ENCODE measurements at regions of chr3 and their contacts with region 1.

Region 1: DNA sequence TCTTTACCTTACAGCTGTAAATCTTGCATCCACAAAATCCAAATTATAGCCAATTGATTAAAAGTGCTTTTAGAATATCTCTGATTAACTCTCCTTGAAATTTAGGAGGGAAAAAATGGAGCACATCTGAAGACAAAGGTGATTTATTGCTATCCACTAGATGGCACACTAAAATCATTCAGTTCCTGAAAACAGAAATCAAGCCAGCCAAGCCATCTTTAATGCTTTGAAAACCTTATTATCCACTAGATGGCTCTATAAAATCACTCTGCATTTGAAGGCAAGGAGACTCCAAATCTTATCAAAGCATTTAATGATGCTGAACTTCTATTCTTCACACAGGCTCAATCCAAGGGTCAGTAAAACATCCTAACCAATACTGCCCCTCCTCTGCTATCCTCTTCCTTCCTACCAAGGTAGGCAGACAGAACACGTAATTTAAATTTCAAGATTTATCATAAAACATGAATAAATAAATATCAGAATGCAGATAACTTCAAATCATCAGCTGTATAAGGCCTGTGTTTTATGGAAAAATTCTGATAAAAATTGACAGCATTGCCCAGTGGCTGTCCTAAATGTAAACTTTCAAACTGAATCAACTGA is 48.4 kb downstream of the GOLIM4 start:
- DNase-seq: peak; percentile 59
- ATAC-seq: peak; percentile 81
- H3K4me3 ChIP-seq: no peak overlapping the region
- H3K27ac ChIP-seq: no peak overlapping the region
- H3K4me1 ChIP-seq: peaks cover 6% of the 10 kb centered on the region
- H3K27me3 ChIP-seq: no peaks in the 10 kb centered on the region
- CTCF ChIP-seq: peak; percentile 64 to 96 (median 83)
- EP300 ChIP-seq: no peak
- POLR2A ChIP-seq: no peak
- RAD21 ChIP-seq: peak; percentile 97

Region 2: DNA sequence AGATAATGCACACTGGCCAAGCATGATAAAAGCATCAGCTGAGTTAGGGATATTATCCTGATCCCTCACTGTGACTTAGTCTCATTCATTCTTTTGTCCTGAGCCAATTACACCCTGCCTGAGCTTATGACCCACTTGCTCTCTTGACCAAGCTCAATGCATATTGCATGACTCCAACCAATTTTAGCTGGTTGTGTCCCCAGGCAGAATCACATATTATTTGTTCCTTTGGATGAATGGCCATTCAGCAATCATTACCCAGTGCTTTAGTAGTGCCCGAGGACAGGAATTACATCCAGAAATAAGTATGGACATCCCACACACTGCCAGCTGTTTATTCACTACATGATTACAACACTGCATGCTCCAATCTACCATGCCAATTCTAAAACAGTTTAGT is 989.7 kb before region 1 on chr3:
- CTCF ChIA-PET with region 1: no interaction called
- POLR2A ChIA-PET with region 1: no interaction called
- RAD21 ChIA-PET with region 1: no interaction called
- SMC1A ChIA-PET with region 1: no interaction called
- in situ Hi-C with region 1: no loop called
- intact Hi-C with region 1: no loop called
- DNase-seq: no peak
- ATAC-seq: no peak
- H3K4me3 ChIP-seq: no peak overlapping the region
- H3K27ac ChIP-seq: no peak overlapping the region
- H3K4me1 ChIP-seq: no peaks in the 10 kb centered on the region
- H3K27me3 ChIP-seq: no peaks in the 10 kb centered on the region
- CTCF ChIP-seq: no peak
- EP300 ChIP-seq: no peak
- POLR2A ChIP-seq: no peak
- RAD21 ChIP-seq: no peak

Region 3: DNA sequence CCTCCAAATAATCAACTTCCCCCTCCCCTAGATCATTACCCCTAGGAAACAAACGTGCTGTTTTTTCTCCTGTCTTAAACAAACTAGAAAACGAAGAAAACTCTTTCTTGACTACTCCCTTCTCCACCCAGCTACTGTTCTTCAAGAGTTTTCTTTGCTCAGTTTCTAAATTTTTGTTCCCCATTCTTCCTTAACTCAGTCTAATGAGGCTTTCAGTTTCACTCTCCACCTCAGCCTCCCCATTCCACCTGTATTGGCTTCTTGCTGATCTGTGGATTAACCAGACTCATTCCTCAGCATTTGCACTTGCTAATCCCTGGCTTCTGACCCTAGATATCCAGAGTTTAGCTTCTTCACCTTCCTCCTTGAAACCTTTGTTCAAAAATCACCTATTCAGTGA is 285.0 kb before region 1 on chr3:
- CTCF ChIA-PET with region 1: no interaction called
- POLR2A ChIA-PET with region 1: no interaction called
- RAD21 ChIA-PET with region 1: no interaction called
- SMC1A ChIA-PET with region 1: no interaction called
- in situ Hi-C with region 1: no loop called
- intact Hi-C with region 1: no loop called
- DNase-seq: no peak
- ATAC-seq: no peak
- H3K4me3 ChIP-seq: no peak overlapping the region
- H3K27ac ChIP-seq: no peak overlapping the region
- H3K4me1 ChIP-seq: no peaks in the 10 kb centered on the region
- H3K27me3 ChIP-seq: no peaks in the 10 kb centered on the region
- CTCF ChIP-seq: no peak
- EP300 ChIP-seq: no peak
- POLR2A ChIP-seq: no peak
- RAD21 ChIP-seq: no peak

Region 4: GRCh38 chr3:167958141-167958540 is 89.2 kb before region 1 on chr3:
- CTCF ChIA-PET with region 1: no interaction called
- POLR2A ChIA-PET with region 1: no interaction called
- RAD21 ChIA-PET with region 1: no interaction called
- SMC1A ChIA-PET with region 1: no interaction called
- in situ Hi-C with region 1: no loop called
- intact Hi-C with region 1: no loop called
- DNase-seq: no peak
- ATAC-seq: no peak
- H3K4me3 ChIP-seq: no peak overlapping the region
- H3K27ac ChIP-seq: no peak overlapping the region
- H3K4me1 ChIP-seq: no peaks in the 10 kb centered on the region
- H3K27me3 ChIP-seq: no peaks in the 10 kb centered on the region
- CTCF ChIP-seq: no peak
- EP300 ChIP-seq: no peak
- POLR2A ChIP-seq: no peak
- RAD21 ChIP-seq: no peak

Region 5: GRCh38 chr3:168061332-168061996 is 14.2 kb after region 1 on chr3:
- CTCF ChIA-PET with region 1: interaction called, 35 read pairs
- POLR2A ChIA-PET with region 1: no interaction called
- RAD21 ChIA-PET with region 1: interaction called, 19 read pairs
- SMC1A ChIA-PET with region 1: interaction called, 19 read pairs
- in situ Hi-C with region 1: no loop called
- intact Hi-C with region 1: no loop called
- DNase-seq: no peak
- ATAC-seq: peak; percentile 96
- H3K4me3 ChIP-seq: peak overlapping the region; percentile 42; the same call in 1 of the 2 replicates
- H3K27ac ChIP-seq: no peak overlapping the region
- H3K4me1 ChIP-seq: peaks cover 10% of the 10 kb centered on the region
- H3K27me3 ChIP-seq: no peaks in the 10 kb centered on the region
- CTCF ChIP-seq: no peak
- EP300 ChIP-seq: peak in 1 of 2 experiments; percentile 48; a peak in 1 of 4 replicates
- POLR2A ChIP-seq: no peak
- RAD21 ChIP-seq: 0 out of 2 replicates have a peak, but pooled peaks have one; percentile 2

Region 6: DNA sequence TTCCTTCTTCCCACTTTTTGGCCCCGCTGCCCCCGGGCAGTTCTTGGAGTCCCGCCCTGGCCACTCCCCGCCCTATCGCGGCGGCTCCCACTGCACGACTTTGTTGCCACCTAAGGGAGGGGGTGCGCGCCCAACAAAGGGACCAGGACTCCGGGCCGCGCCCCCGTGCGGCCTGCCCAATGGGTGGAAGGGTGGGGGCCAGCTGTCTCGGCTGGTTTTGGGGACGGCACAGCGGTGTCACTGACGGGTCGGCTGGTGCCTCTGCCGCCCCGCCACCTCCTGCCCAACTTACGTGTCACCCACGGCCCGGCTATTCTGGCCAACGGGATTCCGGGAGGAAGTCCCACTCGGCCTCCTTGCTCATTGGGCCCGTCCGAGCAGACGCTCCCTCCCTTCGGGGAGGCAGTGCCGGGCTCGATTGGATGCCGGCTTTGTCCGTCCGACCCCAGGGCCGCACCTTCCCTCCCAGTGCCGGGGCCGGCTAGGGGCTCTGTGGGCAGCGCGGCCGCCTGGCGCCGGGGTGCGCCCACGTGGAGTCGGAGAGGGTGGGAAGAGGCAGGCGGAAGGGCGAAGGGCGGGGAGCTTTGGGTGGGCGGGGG is 48.4 kb after region 1 on chr3 and contains the start of gene GOLIM4:
- CTCF ChIA-PET with region 1: interaction called, 23 read pairs
- POLR2A ChIA-PET with region 1: interaction called, 7 read pairs
- RAD21 ChIA-PET with region 1: interaction called, 26 read pairs
- SMC1A ChIA-PET with region 1: interaction called, 72 read pairs
- in situ Hi-C with region 1: no loop called
- intact Hi-C with region 1: loop called (anchors 1 kb)
- DNase-seq: peak; percentile 90
- ATAC-seq: peak; percentile 90
- H3K4me3 ChIP-seq: peak within 1 kb of the TSS; percentile 76
- H3K27ac ChIP-seq: peak within 1 kb of the TSS; percentile 81
- H3K4me1 ChIP-seq: no peaks in the 10 kb centered on the region
- H3K27me3 ChIP-seq: no peaks in the 10 kb centered on the region
- CTCF ChIP-seq: 0 out of 6 replicates have a peak, but pooled peaks of 2 of the 3 experiments have one; percentile 1 to 7
- EP300 ChIP-seq: no peak
- POLR2A ChIP-seq: peak; percentile 78
- RAD21 ChIP-seq: no peak
- polyA plus RNA-seq, gene GOLIM4: 11.1 to 14.6 TPM

Region 7: GRCh38 chr3:168156479-168156878 is 109.2 kb after region 1 on chr3:
- CTCF ChIA-PET with region 1: interaction called, 17 read pairs
- POLR2A ChIA-PET with region 1: no interaction called
- RAD21 ChIA-PET with region 1: interaction called, 10 read pairs
- SMC1A ChIA-PET with region 1: interaction called, 18 read pairs
- in situ Hi-C with region 1: loop called (anchors 5 kb)
- intact Hi-C with region 1: no loop called
- DNase-seq: no peak
- ATAC-seq: peak; percentile 49
- H3K4me3 ChIP-seq: no peak overlapping the region
- H3K27ac ChIP-seq: no peak overlapping the region
- H3K4me1 ChIP-seq: peaks cover 5% of the 10 kb centered on the region; the same call in 1 of the 2 replicates
- H3K27me3 ChIP-seq: no peaks in the 10 kb centered on the region
- CTCF ChIP-seq: no peak
- EP300 ChIP-seq: no peak
- POLR2A ChIP-seq: no peak
- RAD21 ChIP-seq: no peak

Region 8: GRCh38 chr3:168398371-168399025 is 351.2 kb after region 1 on chr3:
- CTCF ChIA-PET with region 1: no interaction called
- POLR2A ChIA-PET with region 1: no interaction called
- RAD21 ChIA-PET with region 1: no interaction called
- SMC1A ChIA-PET with region 1: no interaction called
- in situ Hi-C with region 1: no loop called
- intact Hi-C with region 1: no loop called
- DNase-seq: no peak
- ATAC-seq: no peak
- H3K4me3 ChIP-seq: no peak overlapping the region
- H3K27ac ChIP-seq: no peak overlapping the region
- H3K4me1 ChIP-seq: no peaks in the 10 kb centered on the region
- H3K27me3 ChIP-seq: no peaks in the 10 kb centered on the region
- CTCF ChIP-seq: no peak
- EP300 ChIP-seq: no peak
- POLR2A ChIP-seq: no peak
- RAD21 ChIP-seq: no peak

Region 9: DNA sequence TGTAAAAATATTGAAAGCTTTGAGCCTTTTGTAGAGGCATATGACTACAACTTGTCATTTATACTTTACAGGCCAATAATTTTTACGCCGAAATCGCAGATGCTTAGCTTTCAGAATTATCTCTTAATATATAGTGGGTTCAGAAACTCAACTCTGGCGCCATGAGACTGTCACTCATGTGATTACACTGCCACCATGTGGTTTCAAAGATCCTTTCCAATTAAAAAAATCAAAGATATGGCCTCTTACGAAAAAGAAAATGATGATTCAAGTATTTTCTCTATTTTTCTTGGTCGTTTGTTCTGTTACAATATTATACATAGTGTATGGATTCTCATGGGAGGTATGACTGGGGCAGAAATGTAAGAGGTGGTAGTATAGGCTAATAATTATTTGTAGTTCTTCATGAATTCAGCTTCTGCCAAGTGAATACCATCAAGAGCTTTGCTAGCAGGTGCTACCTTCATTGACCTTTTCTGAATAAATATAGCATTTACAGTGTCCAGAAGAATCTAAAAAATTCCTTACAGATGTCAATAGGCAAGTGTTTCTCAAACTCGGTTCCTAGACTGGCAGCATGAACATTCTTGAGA is 800.1 kb after region 1 on chr3:
- CTCF ChIA-PET with region 1: no interaction called
- POLR2A ChIA-PET with region 1: no interaction called
- RAD21 ChIA-PET with region 1: no interaction called
- SMC1A ChIA-PET with region 1: no interaction called
- in situ Hi-C with region 1: loop called (anchors 10 kb)
- intact Hi-C with region 1: loop called (anchors 10 kb)
- DNase-seq: peak; percentile 12
- ATAC-seq: peak; percentile 77
- H3K4me3 ChIP-seq: no peak overlapping the region
- H3K27ac ChIP-seq: no peak overlapping the region
- H3K4me1 ChIP-seq: no peaks in the 10 kb centered on the region
- H3K27me3 ChIP-seq: no peaks in the 10 kb centered on the region
- CTCF ChIP-seq: peak; percentile 41 to 76 (median 46); a peak in 5 of 6 replicates
- EP300 ChIP-seq: no peak
- POLR2A ChIP-seq: no peak
- RAD21 ChIP-seq: peak; percentile 79

Measured in GM12878 (cell line).